Activated B cell treated with CpG ODN at 0.5 μM for 24 hours (primary cell): ENCODE measurements at regions of chr18 and their contacts with region 1.

Region 1: GRCh38 chr18:35029770-35030169 is 11.4 kb upstream of the MAPRE2 start:
- DNase-seq: no peak
- ATAC-seq: peak; percentile 84
- H3K4me3 Mint-ChIP-seq: peak overlapping the region; percentile 84
- H3K27ac Mint-ChIP-seq: peak overlapping the region; percentile 97
- H3K4me1 Mint-ChIP-seq: peaks cover 41% of the 10 kb centered on the region
- H3K27me3 Mint-ChIP-seq: no peaks in the 10 kb centered on the region
- CTCF ChIP-seq: no peak

Region 2: GRCh38 chr18:34647251-34647650 is 382.5 kb before region 1 on chr18:
- CTCF ChIA-PET with region 1: no interaction called
- POLR2A ChIA-PET with region 1: no interaction called
- intact Hi-C with region 1: no loop called
- DNase-seq: no peak
- ATAC-seq: no peak
- H3K4me3 Mint-ChIP-seq: no peak overlapping the region
- H3K27ac Mint-ChIP-seq: no peak overlapping the region
- H3K4me1 Mint-ChIP-seq: no peaks in the 10 kb centered on the region
- H3K27me3 Mint-ChIP-seq: peaks cover 2% of the 10 kb centered on the region
- CTCF ChIP-seq: no peak

Region 3: GRCh38 chr18:35050028-35050546 is 20.3 kb after region 1 on chr18:
- CTCF ChIA-PET with region 1: interaction called, 11 read pairs
- POLR2A ChIA-PET with region 1: interaction called, 6 read pairs
- intact Hi-C with region 1: loop called (anchors 1 kb)
- DNase-seq: no peak
- ATAC-seq: peak; percentile 41
- H3K4me3 Mint-ChIP-seq: peak overlapping the region; percentile 71
- H3K27ac Mint-ChIP-seq: peak overlapping the region; percentile 95
- H3K4me1 Mint-ChIP-seq: peaks cover 79% of the 10 kb centered on the region
- H3K27me3 Mint-ChIP-seq: no peaks in the 10 kb centered on the region
- CTCF ChIP-seq: no peak

Region 4: GRCh38 chr18:35071819-35072247 is 42.1 kb after region 1 on chr18:
- CTCF ChIA-PET with region 1: interaction called, 5 read pairs
- POLR2A ChIA-PET with region 1: interaction called, 6 read pairs
- intact Hi-C with region 1: loop called (anchors 5 kb)
- DNase-seq: no peak
- ATAC-seq: no peak
- H3K4me3 Mint-ChIP-seq: no peak overlapping the region
- H3K27ac Mint-ChIP-seq: peak overlapping the region; percentile 54
- H3K4me1 Mint-ChIP-seq: peaks cover 44% of the 10 kb centered on the region
- H3K27me3 Mint-ChIP-seq: no peaks in the 10 kb centered on the region
- CTCF ChIP-seq: no peak

Region 5: GRCh38 chr18:35122586-35123224 is 92.9 kb after region 1 on chr18:
- CTCF ChIA-PET with region 1: interaction called, 6 read pairs
- POLR2A ChIA-PET with region 1: interaction called, 6 read pairs
- intact Hi-C with region 1: loop called (anchors 5 kb)
- DNase-seq: no peak
- ATAC-seq: peak; percentile 91
- H3K4me3 Mint-ChIP-seq: peak overlapping the region; percentile 4
- H3K27ac Mint-ChIP-seq: peak overlapping the region; percentile 46
- H3K4me1 Mint-ChIP-seq: peaks cover 45% of the 10 kb centered on the region
- H3K27me3 Mint-ChIP-seq: no peaks in the 10 kb centered on the region
- CTCF ChIP-seq: no peak

Region 6: DNA sequence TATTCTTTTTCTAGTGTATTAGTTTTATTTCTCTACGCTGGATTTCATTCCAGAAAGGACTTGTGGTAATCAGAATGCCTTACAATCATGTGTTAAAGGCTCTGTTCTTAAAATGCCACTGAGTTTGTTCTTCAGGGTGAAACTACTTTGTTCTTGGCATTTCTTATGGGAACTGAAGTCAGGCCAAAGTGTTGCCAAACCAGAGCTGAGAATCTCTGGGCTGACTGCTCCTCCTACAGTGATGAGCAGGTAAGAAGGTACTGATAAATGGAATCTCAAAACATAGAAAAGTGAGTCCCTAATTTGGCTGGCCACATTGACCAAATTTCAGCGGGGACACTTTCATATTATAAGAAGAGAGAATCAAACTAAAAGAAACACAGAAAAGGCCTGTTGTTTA is 156.0 kb after region 1 on chr18:
- CTCF ChIA-PET with region 1: no interaction called
- POLR2A ChIA-PET with region 1: no interaction called
- intact Hi-C with region 1: loop called (anchors 1 kb)
- DNase-seq: no peak
- ATAC-seq: no peak
- H3K4me3 Mint-ChIP-seq: no peak overlapping the region
- H3K27ac Mint-ChIP-seq: no peak overlapping the region
- H3K4me1 Mint-ChIP-seq: peaks cover 4% of the 10 kb centered on the region
- H3K27me3 Mint-ChIP-seq: no peaks in the 10 kb centered on the region
- CTCF ChIP-seq: no peak

Region 7: DNA sequence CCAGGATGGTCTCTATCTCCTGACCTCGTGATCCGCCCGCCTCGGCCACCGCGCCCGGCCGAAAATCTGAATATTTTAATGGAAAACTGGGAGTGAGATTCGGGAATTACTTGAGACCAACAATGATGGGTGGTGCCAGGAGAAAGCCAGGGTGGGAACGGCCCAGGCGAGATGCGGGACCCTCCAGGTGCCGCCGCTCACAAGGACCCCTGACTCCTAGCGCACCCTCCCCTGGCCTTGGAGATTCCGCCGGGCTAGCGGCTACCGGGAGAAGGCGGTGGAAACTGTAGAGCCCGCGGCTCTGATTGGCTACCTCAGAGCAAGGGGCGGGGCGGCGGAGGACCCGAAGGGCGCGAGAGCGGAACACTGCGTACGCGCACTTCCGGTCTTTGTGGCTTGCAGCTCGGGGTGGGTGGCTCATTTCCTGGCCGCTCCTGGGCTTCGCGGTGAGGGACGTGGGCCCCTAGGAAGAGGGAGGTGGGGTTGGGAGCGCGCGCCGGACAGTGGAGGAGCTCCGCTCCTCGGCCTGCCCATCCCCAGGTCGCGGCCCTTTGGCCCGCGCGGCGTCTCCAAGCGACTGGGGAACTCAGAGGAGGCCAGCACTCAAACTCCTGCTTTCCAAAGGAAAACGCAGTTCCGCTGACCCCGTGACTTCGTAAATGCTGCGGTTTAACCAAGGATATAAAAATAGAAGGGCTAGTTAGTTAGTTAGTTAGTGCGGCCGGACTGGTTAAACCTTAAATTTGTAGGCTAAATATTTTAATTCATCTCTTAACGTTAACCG is 211.1 kb after region 1 on chr18 and contains the start of gene ZNF397:
- CTCF ChIA-PET with region 1: interaction called, 6 read pairs
- POLR2A ChIA-PET with region 1: interaction called, 16 read pairs
- intact Hi-C with region 1: no loop called
- DNase-seq: peak; percentile 93
- ATAC-seq: peak; percentile 97
- H3K4me3 Mint-ChIP-seq: peak within 1 kb of the TSS; percentile 97
- H3K27ac Mint-ChIP-seq: peak within 1 kb of the TSS; percentile 98
- H3K4me1 Mint-ChIP-seq: peaks cover 22% of the 10 kb centered on the region
- H3K27me3 Mint-ChIP-seq: no peaks in the 10 kb centered on the region
- CTCF ChIP-seq: no peak
- total RNA-seq, gene ZNF397: 35.2 and 48.7 TPM in 2 replicates